Heart right ventricle (tissue), 16 donors: ENCODE measurements at regions of chr7 and their contacts with region 1.

Region 1: DNA sequence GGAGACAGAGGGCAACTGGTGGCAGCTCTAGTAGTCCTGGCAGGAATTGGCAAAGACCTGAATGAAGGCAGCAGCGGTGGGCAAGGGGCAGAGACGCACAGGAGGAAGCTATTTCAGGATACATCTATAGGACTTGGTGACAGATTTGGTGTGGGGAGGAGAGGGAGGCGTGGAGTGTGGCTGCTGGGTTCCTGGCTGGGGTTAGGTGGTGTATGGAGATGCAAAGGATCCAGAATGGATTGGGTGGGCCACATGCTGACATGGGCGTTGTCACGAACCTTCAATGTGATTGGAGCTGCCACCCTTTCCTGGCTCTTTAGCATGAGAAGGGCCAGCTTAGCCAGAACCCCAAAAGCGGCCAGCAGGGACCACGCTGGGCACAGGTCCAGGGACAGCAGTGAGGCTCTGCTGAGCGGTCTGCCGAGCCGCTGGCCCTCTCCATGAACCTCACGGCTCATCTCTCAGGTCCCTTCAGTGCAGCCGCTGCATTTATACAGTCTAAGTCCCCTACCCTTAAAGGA is 10.2 kb upstream of the ADCY1 start:
- DNase-seq: peak in 1 of 2 donors; percentile 36
- ATAC-seq: peak; percentile 48 to 76 (median 66)
- H3K4me3 ChIP-seq: peak overlapping the region in 6 of 10 donors; percentile 21 to 39 (median 35)
- H3K27ac ChIP-seq: peak overlapping the region in 9 of 10 donors; percentile 31 to 72 (median 61)
- H3K4me1 ChIP-seq: peaks cover 7 to 26% (median 18%) of the 10 kb centered on the region in 9 donors
- H3K27me3 ChIP-seq: no peaks in the 10 kb centered on the region
- CTCF ChIP-seq: no peak

Region 2: DNA sequence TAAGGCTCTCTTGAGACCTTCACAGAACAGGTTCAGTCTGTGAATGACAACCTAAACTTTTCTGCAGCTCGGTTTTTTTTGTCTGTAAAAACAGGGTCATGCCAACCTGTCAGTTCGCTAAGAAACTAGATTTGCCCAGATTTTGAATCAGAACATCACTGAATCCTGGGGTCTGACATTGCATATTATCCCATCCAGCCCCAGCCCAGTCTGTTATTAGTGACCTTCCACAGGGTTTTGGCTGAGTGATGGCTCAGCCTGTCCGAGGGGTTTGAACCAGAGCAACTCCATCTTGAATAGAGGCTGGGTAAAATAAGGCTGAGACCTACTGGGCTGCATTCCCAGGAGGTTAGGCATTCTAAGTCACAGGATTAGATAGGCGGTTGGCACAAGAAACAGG is 19.6 kb before region 1 on chr7:
- intact Hi-C with region 1: loop called in 1 of 10 experiments (anchors 2 kb)
- DNase-seq: no peak
- ATAC-seq: no peak
- H3K4me3 ChIP-seq: no peak overlapping the region
- H3K27ac ChIP-seq: peak overlapping the region in 1 of 10 donors; percentile 23
- H3K4me1 ChIP-seq: peaks cover 0 to 10% (median 0%) of the 10 kb centered on the region in 9 donors
- H3K27me3 ChIP-seq: no peaks in the 10 kb centered on the region
- CTCF ChIP-seq: no peak

Region 3: DNA sequence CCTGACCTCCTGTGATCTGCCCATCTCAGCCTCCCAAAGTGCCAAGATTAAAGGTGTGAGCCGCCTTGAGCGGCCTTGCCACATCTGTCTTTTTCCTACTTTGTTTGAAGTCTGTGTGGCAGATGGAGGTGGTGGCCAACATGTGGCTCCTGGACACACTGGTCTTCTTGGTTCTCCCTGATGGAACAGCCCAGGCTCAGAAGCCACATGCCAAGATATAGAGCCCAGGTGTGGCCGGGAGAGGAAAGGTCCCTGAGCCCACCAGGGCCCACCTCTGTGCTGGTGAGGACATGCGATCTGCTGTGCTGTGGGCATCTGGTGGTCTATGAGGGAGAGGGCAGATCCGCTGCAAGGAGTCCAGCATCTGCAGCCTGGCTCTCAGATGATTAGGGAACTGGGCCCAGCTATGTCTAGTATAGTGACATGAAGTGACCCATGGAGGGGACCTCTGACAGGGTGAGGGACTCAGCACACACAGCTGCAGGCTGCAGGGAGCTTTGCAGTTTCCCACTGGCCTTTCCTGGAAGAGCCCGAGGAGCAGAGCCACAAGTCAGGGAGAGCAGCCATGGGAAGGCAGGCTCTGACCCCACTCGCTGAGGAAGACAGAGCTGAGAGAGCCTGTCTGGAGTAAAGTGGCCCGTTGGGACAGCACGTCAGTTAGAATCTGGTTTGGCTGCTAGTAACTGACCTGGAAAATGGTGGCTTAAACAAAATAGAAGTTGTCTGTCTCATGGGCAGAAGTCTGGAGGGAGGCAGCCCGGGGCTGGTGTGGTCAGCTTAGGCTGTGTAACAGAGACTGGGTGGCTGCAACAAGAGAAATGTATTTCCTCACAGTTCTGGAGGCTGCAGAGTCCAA is 36.1 kb after region 1 on chr7:
- intact Hi-C with region 1: loop called in 1 of 10 experiments (anchors 2 kb)
- DNase-seq: peak in 1 of 2 donors; percentile 46
- ATAC-seq: peak; percentile 47 to 86 (median 77)
- H3K4me3 ChIP-seq: no peak overlapping the region
- H3K27ac ChIP-seq: peak overlapping the region in 1 of 10 donors; percentile 39
- H3K4me1 ChIP-seq: peaks cover 0 to 16% (median 0%) of the 10 kb centered on the region in 9 donors
- H3K27me3 ChIP-seq: no peaks in the 10 kb centered on the region
- CTCF ChIP-seq: no peak